ENCODE measurements at regions of chr15 and their contacts with region 1.

Region 1: GRCh38 chr15:94119923-94120775 is 111.2 kb upstream of the MCTP2 start:
- DNase-seq: no peak

Region 2: GRCh38 chr15:93997084-93997918 is 122.8 kb before region 1 on chr15:
- intact Hi-C with region 1: loop called (anchors 5 kb)
- DNase-seq: no peak